ENCODE measurements at regions of chr3 and their contacts with region 1.

Region 1: DNA sequence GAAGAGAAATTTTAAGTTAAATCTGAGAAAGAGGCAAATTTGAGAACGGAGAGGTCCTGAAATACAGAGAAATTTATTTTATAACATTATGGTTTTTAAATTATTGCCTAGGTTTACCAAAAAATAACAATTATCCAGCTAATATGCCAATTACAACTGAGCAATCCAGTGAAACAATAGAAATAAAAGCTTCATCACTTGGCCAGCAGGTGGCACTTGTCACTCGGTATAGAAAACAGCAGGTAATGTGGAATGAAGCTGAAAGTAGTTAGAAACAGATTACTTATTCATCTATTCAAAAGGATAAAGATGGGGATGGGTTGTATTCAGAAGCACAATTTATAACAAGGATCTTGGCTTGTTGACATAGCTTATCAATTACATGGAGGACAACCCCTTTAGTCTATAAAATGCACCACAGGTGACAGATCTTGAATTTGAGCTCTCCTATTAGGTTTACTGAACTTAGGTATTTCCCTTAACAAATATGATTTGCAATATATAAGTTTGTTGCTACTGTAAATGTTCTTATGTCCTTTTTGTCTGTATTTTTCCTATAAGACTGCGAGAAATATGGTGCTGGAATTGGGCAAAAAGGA is 70.1 kb upstream of the GUCA1C start:
- DNase-seq: peak; percentile 34
- ATAC-seq: no peak
- H3K4me3 Mint-ChIP-seq: no peak overlapping the region
- H3K27ac Mint-ChIP-seq: no peak overlapping the region
- H3K4me1 Mint-ChIP-seq: no peaks in the 10 kb centered on the region
- H3K27me3 Mint-ChIP-seq: no peaks in the 10 kb centered on the region
- CTCF ChIP-seq: peak; percentile 57

Region 2: GRCh38 chr3:109005443-109005842 is 18.3 kb before region 1 on chr3:
- CTCF ChIA-PET with region 1: interaction called, 17 read pairs
- POLR2A ChIA-PET with region 1: no interaction called
- DNase-seq: no peak
- ATAC-seq: peak; percentile 52
- H3K4me3 Mint-ChIP-seq: no peak overlapping the region
- H3K27ac Mint-ChIP-seq: no peak overlapping the region
- H3K4me1 Mint-ChIP-seq: no peaks in the 10 kb centered on the region
- H3K27me3 Mint-ChIP-seq: no peaks in the 10 kb centered on the region
- CTCF ChIP-seq: no peak

Region 3: DNA sequence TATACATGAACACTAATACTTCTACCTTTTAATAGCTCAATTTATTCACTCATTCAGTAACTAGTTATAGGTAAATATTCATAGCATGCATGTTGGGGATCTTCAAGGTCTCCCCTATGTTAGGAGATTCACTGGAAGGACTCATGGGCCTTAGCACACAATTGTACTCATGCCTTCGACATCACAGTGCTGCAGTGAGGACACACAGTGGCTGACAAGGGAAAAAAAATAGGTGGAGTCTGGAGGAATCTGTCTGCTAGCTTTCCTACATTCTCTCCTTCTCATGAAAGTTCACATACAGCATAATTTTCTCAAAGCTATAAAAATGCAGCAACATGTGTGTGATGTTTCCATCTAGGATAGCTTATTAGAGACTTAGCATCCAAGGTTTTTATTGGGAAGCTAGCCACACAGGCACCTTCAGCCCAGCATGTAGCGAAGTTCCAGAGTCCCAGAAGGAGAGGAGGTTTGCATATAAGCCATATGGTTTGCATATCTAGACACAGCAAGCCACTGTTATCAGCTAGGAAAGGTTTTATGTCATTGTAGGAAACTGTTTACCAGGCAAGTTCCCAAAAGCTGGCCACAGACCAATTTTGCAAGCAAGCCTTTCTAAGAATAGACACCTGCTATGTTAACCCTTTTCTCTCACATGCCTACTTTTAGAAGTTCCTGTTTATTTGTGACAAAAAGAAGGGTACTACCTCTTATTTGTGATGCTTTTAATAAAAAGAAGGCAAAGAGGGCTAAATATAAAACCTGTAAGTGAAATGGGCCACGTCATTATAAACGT is 47.8 kb after region 1 on chr3:
- CTCF ChIA-PET with region 1: interaction called, 12 read pairs
- POLR2A ChIA-PET with region 1: no interaction called
- DNase-seq: no peak
- ATAC-seq: peak; percentile 76
- H3K4me3 Mint-ChIP-seq: no peak overlapping the region
- H3K27ac Mint-ChIP-seq: no peak overlapping the region
- H3K4me1 Mint-ChIP-seq: peaks cover 10% of the 10 kb centered on the region
- H3K27me3 Mint-ChIP-seq: no peaks in the 10 kb centered on the region
- CTCF ChIP-seq: no peak

Region 4: DNA sequence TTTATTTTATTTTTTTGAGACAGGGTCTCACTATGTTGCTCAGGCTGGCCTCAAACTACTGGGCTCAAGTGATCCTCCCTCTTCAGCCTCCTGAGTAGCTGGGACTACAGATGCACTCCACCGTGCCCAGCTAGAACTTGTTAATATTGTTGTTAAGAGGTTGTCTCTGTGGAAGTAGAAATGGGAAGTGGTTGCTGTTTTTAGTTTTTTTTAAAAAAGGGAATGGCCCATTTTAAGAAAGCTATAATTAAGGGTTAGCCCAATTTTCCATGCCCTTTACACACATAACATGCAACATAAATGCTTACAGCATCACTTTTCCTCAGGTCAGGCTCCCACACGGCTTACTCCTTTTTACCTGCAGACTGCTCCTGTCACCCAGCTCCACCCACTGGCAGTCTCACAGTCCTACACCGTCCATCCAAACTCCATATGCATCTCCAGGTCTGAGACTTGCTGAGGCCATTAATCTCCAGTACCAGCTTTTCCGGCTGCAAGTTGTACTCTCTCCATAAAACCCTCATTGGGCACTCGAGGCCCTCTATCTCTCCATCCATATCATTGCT is 74.4 kb after region 1 on chr3:
- CTCF ChIA-PET with region 1: interaction called, 19 read pairs
- POLR2A ChIA-PET with region 1: no interaction called
- DNase-seq: peak; percentile 57
- ATAC-seq: peak; percentile 99
- H3K4me3 Mint-ChIP-seq: no peak overlapping the region
- H3K27ac Mint-ChIP-seq: no peak overlapping the region
- H3K4me1 Mint-ChIP-seq: peaks cover 3% of the 10 kb centered on the region
- H3K27me3 Mint-ChIP-seq: no peaks in the 10 kb centered on the region
- CTCF ChIP-seq: no peak

Region 5: DNA sequence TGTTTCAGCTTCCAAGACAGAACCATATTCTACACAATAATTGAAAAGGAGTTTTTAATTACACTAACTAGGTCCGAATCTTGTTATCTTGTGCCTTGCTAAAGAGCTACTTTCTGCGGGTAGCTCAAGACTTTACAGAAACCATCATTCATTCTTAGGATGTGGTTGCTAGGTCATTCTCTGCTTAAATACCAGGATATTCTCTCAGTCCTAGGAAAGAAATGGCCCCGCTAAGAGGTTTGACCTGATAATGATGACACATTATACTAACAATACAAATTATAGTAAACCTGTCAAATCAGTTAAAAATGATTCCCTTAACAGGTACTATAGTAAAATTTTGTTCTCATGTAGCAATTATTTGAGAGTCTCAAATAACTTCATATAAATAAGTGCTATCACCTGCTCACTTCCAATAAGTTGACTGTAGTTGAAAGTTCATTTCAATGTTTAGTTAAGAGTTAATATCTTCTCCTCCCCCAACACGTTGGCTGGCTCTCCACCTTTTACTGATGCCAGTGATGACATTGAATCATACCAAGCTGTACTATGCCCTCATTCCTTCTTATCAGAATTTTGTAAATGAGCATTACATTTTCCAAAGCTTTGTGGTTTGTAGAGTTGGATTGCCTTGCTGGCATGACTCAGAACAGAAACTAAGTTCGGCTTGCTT is 109.2 kb after region 1 on chr3:
- CTCF ChIA-PET with region 1: no interaction called
- POLR2A ChIA-PET with region 1: no interaction called
- DNase-seq: no peak
- ATAC-seq: no peak
- H3K4me3 Mint-ChIP-seq: no peak overlapping the region
- H3K27ac Mint-ChIP-seq: no peak overlapping the region
- H3K4me1 Mint-ChIP-seq: no peaks in the 10 kb centered on the region
- H3K27me3 Mint-ChIP-seq: no peaks in the 10 kb centered on the region
- CTCF ChIP-seq: no peak

Region 6: DNA sequence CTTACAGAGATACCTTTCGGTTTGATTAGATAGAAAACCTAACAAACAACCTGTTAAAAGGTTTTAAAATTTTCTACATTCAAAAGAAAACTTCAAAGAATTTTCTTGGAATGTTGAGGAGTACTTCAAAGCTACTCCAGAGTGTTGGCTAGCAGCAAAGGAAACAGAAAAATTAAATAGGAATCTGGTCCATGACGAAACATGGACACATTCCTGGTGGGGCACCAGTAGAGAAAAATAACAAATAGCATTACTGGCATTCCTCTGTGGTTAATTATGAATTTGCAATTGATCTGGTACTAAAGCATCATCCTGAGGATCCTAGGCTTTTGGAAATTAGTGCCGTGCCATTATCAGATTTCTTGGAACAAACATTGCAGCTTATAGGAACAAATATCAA is 373.1 kb after region 1 on chr3:
- CTCF ChIA-PET with region 1: interaction called, 10 read pairs
- POLR2A ChIA-PET with region 1: no interaction called
- DNase-seq: no peak
- ATAC-seq: no peak
- H3K4me3 Mint-ChIP-seq: no peak overlapping the region
- H3K27ac Mint-ChIP-seq: no peak overlapping the region
- H3K4me1 Mint-ChIP-seq: peaks cover 29% of the 10 kb centered on the region
- H3K27me3 Mint-ChIP-seq: no peaks in the 10 kb centered on the region
- CTCF ChIP-seq: no peak

Measured in WTC11 (cell line).